ENCODE measurements at regions of chr1 and their contacts with region 1.

Region 1: GRCh38 chr1:171485375-171486047 is at the start of gene PRRC2C:
- DNase-seq: peak; percentile 89 to 99
- ATAC-seq: peak; percentile 80 to 94 (median 83)
- H3K4me3 ChIP-seq: peak within 1 kb of the TSS; percentile 91
- H3K4me3 Mint-ChIP-seq: peak within 1 kb of the TSS; percentile 97
- H3K27ac ChIP-seq: peak within 1 kb of the TSS; percentile 91
- H3K27ac Mint-ChIP-seq: peak within 1 kb of the TSS; percentile 99 to 100
- H3K4me1 ChIP-seq: peaks cover 10% of the 10 kb centered on the region
- H3K4me1 Mint-ChIP-seq: peaks cover 54 to 56% of the 10 kb centered on the region in 2 donors
- H3K27me3 ChIP-seq: no peaks in the 10 kb centered on the region
- H3K27me3 Mint-ChIP-seq: no peaks in the 10 kb centered on the region
- CTCF ChIP-seq: peak; percentile 80
- total RNA-seq, gene PRRC2C: 330 to 355 (median 353) TPM

Region 2: GRCh38 chr1:170074250-170075157 is 1411.0 kb before region 1 on chr1 and contains the start of gene KIFAP3:
- intact Hi-C with region 1: loop called (anchors 5 kb)
- DNase-seq: peak; percentile 92 to 99
- ATAC-seq: peak; percentile 92 to 98 (median 94)
- H3K4me3 ChIP-seq: peak within 1 kb of the TSS; percentile 65
- H3K4me3 Mint-ChIP-seq: peak within 1 kb of the TSS; percentile 92
- H3K27ac ChIP-seq: peak within 1 kb of the TSS; percentile 89
- H3K27ac Mint-ChIP-seq: peak within 1 kb of the TSS; percentile 95 to 98
- H3K4me1 ChIP-seq: peaks cover 9% of the 10 kb centered on the region
- H3K4me1 Mint-ChIP-seq: peaks cover 51 to 55% of the 10 kb centered on the region in 2 donors
- H3K27me3 ChIP-seq: no peaks in the 10 kb centered on the region
- H3K27me3 Mint-ChIP-seq: peaks cover 0 to 3% of the 10 kb centered on the region in 2 donors
- CTCF ChIP-seq: no peak
- total RNA-seq, gene KIFAP3: 31.0 to 34.3 (median 33.7) TPM

Region 3: DNA sequence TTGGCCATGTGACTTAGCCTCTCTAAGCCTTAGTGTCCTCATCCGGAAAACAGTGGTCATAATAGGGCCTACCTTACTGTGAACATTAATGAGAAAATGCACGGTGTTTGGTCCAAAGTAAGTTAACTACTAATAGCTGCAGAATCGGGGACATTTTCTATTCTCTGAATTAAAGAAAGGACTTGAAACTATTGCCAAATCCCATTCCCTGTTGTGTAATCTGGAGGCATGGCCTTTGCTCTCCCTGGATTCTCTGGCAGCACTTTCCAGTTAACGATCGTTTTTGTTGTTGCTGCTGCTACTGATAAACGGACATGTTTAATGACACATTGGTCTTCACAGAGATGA is 141.1 kb before region 1 on chr1:
- intact Hi-C with region 1: no loop called
- DNase-seq: no peak
- ATAC-seq: no peak
- H3K4me3 ChIP-seq: no peak overlapping the region
- H3K4me3 Mint-ChIP-seq: no peak overlapping the region
- H3K27ac ChIP-seq: no peak overlapping the region
- H3K27ac Mint-ChIP-seq: no peak overlapping the region
- H3K4me1 ChIP-seq: no peaks in the 10 kb centered on the region
- H3K4me1 Mint-ChIP-seq: no peaks in the 10 kb centered on the region
- H3K27me3 ChIP-seq: no peaks in the 10 kb centered on the region
- H3K27me3 Mint-ChIP-seq: no peaks in the 10 kb centered on the region
- CTCF ChIP-seq: no peak

Region 4: GRCh38 chr1:171509191-171509590 is 23.7 kb after region 1 on chr1:
- intact Hi-C with region 1: loop called (anchors 2 kb)
- DNase-seq: no peak
- ATAC-seq: no peak
- H3K4me3 ChIP-seq: no peak overlapping the region
- H3K4me3 Mint-ChIP-seq: peak overlapping the region; percentile 65
- H3K27ac ChIP-seq: no peak overlapping the region
- H3K27ac Mint-ChIP-seq: peak overlapping the region; percentile 66 to 78
- H3K4me1 ChIP-seq: peaks cover 15% of the 10 kb centered on the region
- H3K4me1 Mint-ChIP-seq: peaks cover 94 to 96% of the 10 kb centered on the region in 2 donors
- H3K27me3 ChIP-seq: no peaks in the 10 kb centered on the region
- H3K27me3 Mint-ChIP-seq: no peaks in the 10 kb centered on the region
- CTCF ChIP-seq: no peak

Region 5: GRCh38 chr1:171530676-171531075 is 45.2 kb after region 1 on chr1:
- intact Hi-C with region 1: loop called (anchors 5 kb)
- DNase-seq: no peak
- ATAC-seq: no peak
- H3K4me3 ChIP-seq: no peak overlapping the region
- H3K4me3 Mint-ChIP-seq: no peak overlapping the region
- H3K27ac ChIP-seq: no peak overlapping the region
- H3K27ac Mint-ChIP-seq: no peak overlapping the region
- H3K4me1 ChIP-seq: no peaks in the 10 kb centered on the region
- H3K4me1 Mint-ChIP-seq: peaks cover 7 to 8% of the 10 kb centered on the region in 2 donors
- H3K27me3 ChIP-seq: no peaks in the 10 kb centered on the region
- H3K27me3 Mint-ChIP-seq: no peaks in the 10 kb centered on the region
- CTCF ChIP-seq: no peak

Region 6: GRCh38 chr1:171741872-171742576 is 256.5 kb after region 1 on chr1 and contains the start of gene VAMP4:
- intact Hi-C with region 1: loop called (anchors 1 kb)
- DNase-seq: peak; percentile 82 to 92
- ATAC-seq: peak; percentile 86 to 95 (median 90)
- H3K4me3 ChIP-seq: peak within 1 kb of the TSS; percentile 86
- H3K4me3 Mint-ChIP-seq: peak within 1 kb of the TSS; percentile 98
- H3K27ac ChIP-seq: peak within 1 kb of the TSS; percentile 94
- H3K27ac Mint-ChIP-seq: peak within 1 kb of the TSS; percentile 96 to 100
- H3K4me1 ChIP-seq: peaks cover 8% of the 10 kb centered on the region
- H3K4me1 Mint-ChIP-seq: peaks cover 54 to 58% of the 10 kb centered on the region in 2 donors
- H3K27me3 ChIP-seq: no peaks in the 10 kb centered on the region
- H3K27me3 Mint-ChIP-seq: no peaks in the 10 kb centered on the region
- CTCF ChIP-seq: no peak
- total RNA-seq, gene VAMP4: 17.5 to 24.2 (median 20.7) TPM

Region 7: GRCh38 chr1:171781176-171781875 is 295.8 kb after region 1 on chr1 and contains the start of gene METTL13:
- intact Hi-C with region 1: loop called (anchors 2 kb)
- DNase-seq: peak; percentile 96 to 99
- ATAC-seq: peak; percentile 92 to 98 (median 93)
- H3K4me3 ChIP-seq: peak within 1 kb of the TSS; percentile 90
- H3K4me3 Mint-ChIP-seq: peak within 1 kb of the TSS; percentile 100
- H3K27ac ChIP-seq: peak within 1 kb of the TSS; percentile 80
- H3K27ac Mint-ChIP-seq: peak within 1 kb of the TSS; percentile 98 to 100
- H3K4me1 ChIP-seq: peaks cover 30% of the 10 kb centered on the region
- H3K4me1 Mint-ChIP-seq: peaks cover 49 to 55% of the 10 kb centered on the region in 2 donors
- H3K27me3 ChIP-seq: no peaks in the 10 kb centered on the region
- H3K27me3 Mint-ChIP-seq: peaks cover 1 to 5% of the 10 kb centered on the region in 2 donors
- CTCF ChIP-seq: no peak
- total RNA-seq, gene METTL13: 12.1 to 23.3 (median 18.2) TPM

Region 8: GRCh38 chr1:172662464-172663109 is 1177.1 kb after region 1 on chr1:
- intact Hi-C with region 1: loop called (anchors 10 kb)
- DNase-seq: peak; percentile 83 to 93
- ATAC-seq: peak; percentile 71 to 86 (median 82)
- H3K4me3 ChIP-seq: peak overlapping the region; percentile 72
- H3K4me3 Mint-ChIP-seq: peak overlapping the region; percentile 92
- H3K27ac ChIP-seq: peak overlapping the region; percentile 90
- H3K27ac Mint-ChIP-seq: peak overlapping the region; percentile 98
- H3K4me1 ChIP-seq: peaks cover 30% of the 10 kb centered on the region
- H3K4me1 Mint-ChIP-seq: peaks cover 82 to 88% of the 10 kb centered on the region in 2 donors
- H3K27me3 ChIP-seq: no peaks in the 10 kb centered on the region
- H3K27me3 Mint-ChIP-seq: no peaks in the 10 kb centered on the region
- CTCF ChIP-seq: no peak